Naive thymus-derived CD4-positive, alpha-beta T cell (primary cell): ENCODE measurements at regions of chr2 and their contacts with region 1.

Region 1: GRCh38 chr2:240513549-240514287 is 44.1 kb downstream of the ANKMY1 start:
- DNase-seq: peak; percentile 57 to 82 (median 76)
- ATAC-seq: peak; percentile 99
- H3K4me3 ChIP-seq: no peak overlapping the region
- H3K4me3 Mint-ChIP-seq: peak overlapping the region in 3 of 10 donors; percentile 12 to 28 (median 13)
- H3K27ac ChIP-seq: no peak overlapping the region
- H3K27ac Mint-ChIP-seq: peak overlapping the region; percentile 9 to 76 (median 42)
- H3K4me1 ChIP-seq: peaks cover 6% of the 10 kb centered on the region in 2 donors
- H3K4me1 Mint-ChIP-seq: peaks cover 6 to 16% (median 12%) of the 10 kb centered on the region in 7 donors
- H3K27me3 ChIP-seq: no peaks in the 10 kb centered on the region
- H3K27me3 Mint-ChIP-seq: no peaks in the 10 kb centered on the region

Region 2: GRCh38 chr2:240579771-240580614 is 66.3 kb after region 1 on chr2:
- CTCF ChIA-PET with region 1: interaction called, 9 read pairs
- POLR2A ChIA-PET with region 1: interaction called, 5 read pairs
- intact Hi-C with region 1: loop called in 1 of 2 experiments (anchors 2 kb)
- DNase-seq: peak; percentile 52 to 81 (median 67)
- ATAC-seq: peak; percentile 91
- H3K4me3 ChIP-seq: no peak overlapping the region
- H3K4me3 Mint-ChIP-seq: peak overlapping the region in 9 of 10 donors; percentile 9 to 58 (median 45)
- H3K27ac ChIP-seq: peak overlapping the region; percentile 33
- H3K27ac Mint-ChIP-seq: peak overlapping the region; percentile 36 to 87 (median 78)
- H3K4me1 ChIP-seq: peaks cover 19 to 22% of the 10 kb centered on the region in 2 donors
- H3K4me1 Mint-ChIP-seq: peaks cover 33 to 62% (median 48%) of the 10 kb centered on the region in 7 donors
- H3K27me3 ChIP-seq: no peaks in the 10 kb centered on the region
- H3K27me3 Mint-ChIP-seq: no peaks in the 10 kb centered on the region

Region 3: GRCh38 chr2:240586198-240586918 is 72.6 kb after region 1 on chr2 and contains the start of gene CAPN10:
- CTCF ChIA-PET with region 1: interaction called, 6 read pairs
- POLR2A ChIA-PET with region 1: interaction called, 4 read pairs
- intact Hi-C with region 1: loop called (anchors 1 kb)
- DNase-seq: peak; percentile 93 to 98 (median 97)
- ATAC-seq: peak; percentile 92
- H3K4me3 ChIP-seq: peak within 1 kb of the TSS; percentile 89
- H3K4me3 Mint-ChIP-seq: peak within 1 kb of the TSS; percentile 82 to 97 (median 94)
- H3K27ac ChIP-seq: peak within 1 kb of the TSS; percentile 94
- H3K27ac Mint-ChIP-seq: peak within 1 kb of the TSS; percentile 90 to 97 (median 92)
- H3K4me1 ChIP-seq: peaks cover 30 to 33% of the 10 kb centered on the region in 2 donors
- H3K4me1 Mint-ChIP-seq: peaks cover 31 to 69% (median 56%) of the 10 kb centered on the region in 7 donors
- H3K27me3 ChIP-seq: no peaks in the 10 kb centered on the region
- H3K27me3 Mint-ChIP-seq: no peaks in the 10 kb centered on the region
- total RNA-seq, gene CAPN10: 54.1 to 74.8 (median 64.5) TPM

Region 4: DNA sequence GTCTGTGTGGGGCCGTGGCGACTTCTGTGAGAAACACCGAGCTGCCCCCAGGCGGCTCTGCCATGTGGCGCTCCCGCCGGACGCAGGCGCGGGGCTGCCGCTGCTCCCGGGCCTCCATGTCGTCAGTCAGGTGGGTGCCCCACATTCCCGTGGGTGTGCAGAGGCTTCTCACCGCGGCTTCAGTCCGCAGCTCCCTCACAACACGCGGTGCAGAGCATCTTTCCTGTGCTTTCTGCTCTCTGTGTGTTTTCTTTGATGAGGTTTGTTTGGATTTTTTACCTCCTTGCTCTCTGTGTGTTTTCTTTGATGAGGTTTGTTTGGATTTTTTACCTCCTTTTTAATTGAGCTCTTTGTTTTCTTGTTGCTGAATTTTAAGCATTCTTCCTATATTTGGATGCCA is 190.9 kb after region 1 on chr2:
- CTCF ChIA-PET with region 1: no interaction called
- POLR2A ChIA-PET with region 1: no interaction called
- intact Hi-C with region 1: loop called in 1 of 2 experiments (anchors 10 kb)
- DNase-seq: peak in 7 of 9 donors; percentile 38 to 62 (median 55)
- ATAC-seq: peak; percentile 62
- H3K4me3 ChIP-seq: no peak overlapping the region
- H3K4me3 Mint-ChIP-seq: peak overlapping the region; percentile 5 to 78 (median 57)
- H3K27ac ChIP-seq: no peak overlapping the region
- H3K27ac Mint-ChIP-seq: peak overlapping the region in 5 of 9 donors; percentile 1 to 78 (median 16)
- H3K4me1 ChIP-seq: peaks cover 10 to 22% of the 10 kb centered on the region in 2 donors
- H3K4me1 Mint-ChIP-seq: peaks cover 15 to 20% (median 17%) of the 10 kb centered on the region in 7 donors
- H3K27me3 ChIP-seq: peaks cover 0 to 3% of the 10 kb centered on the region in 2 donors
- H3K27me3 Mint-ChIP-seq: peaks cover 5 to 46% (median 10%) of the 10 kb centered on the region in 5 donors

Region 5: GRCh38 chr2:240759454-240759853 is 245.7 kb after region 1 on chr2:
- CTCF ChIA-PET with region 1: no interaction called
- POLR2A ChIA-PET with region 1: no interaction called
- intact Hi-C with region 1: loop called in 1 of 2 experiments (anchors 5 kb)
- DNase-seq: peak in 1 of 9 donors; percentile 41
- ATAC-seq: no peak
- H3K4me3 ChIP-seq: no peak overlapping the region
- H3K4me3 Mint-ChIP-seq: no peak overlapping the region
- H3K27ac ChIP-seq: no peak overlapping the region
- H3K27ac Mint-ChIP-seq: peak overlapping the region in 1 of 9 donors; percentile 12
- H3K4me1 ChIP-seq: no peaks in the 10 kb centered on the region
- H3K4me1 Mint-ChIP-seq: peaks cover 0 to 2% (median 0%) of the 10 kb centered on the region in 7 donors
- H3K27me3 ChIP-seq: no peaks in the 10 kb centered on the region
- H3K27me3 Mint-ChIP-seq: no peaks in the 10 kb centered on the region

Region 6: DNA sequence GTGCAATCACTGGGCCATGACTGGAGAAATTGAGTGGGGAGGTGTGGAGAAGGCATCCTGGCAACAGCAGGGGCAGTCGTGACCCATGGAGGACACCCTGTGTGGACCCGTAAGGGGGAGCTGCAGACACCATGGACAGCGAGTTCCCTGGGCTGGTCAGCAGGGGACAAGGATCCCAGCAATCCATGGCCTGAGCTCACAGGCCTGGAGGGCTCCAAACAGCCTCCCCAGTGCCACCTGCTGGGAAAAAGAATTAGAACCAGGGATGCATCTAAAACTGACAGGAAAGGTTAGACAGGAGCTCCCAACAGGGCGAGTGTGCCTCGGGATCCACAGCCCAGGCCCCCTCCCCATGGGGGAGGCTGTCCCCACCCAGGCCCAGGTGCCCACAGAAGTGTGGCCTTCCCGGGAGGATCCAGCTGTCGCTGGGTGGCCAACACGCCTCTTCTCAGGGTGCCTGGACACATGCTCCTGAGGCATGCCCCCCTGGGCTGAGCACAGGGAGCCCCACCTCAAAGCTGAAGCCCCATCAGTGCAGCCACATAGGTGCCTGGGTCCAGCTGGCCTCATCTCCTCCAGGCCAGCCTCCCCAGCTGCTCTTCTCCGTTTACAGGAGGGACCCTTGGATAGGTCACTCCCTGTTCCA is 326.8 kb after region 1 on chr2:
- CTCF ChIA-PET with region 1: interaction called, 8 read pairs
- POLR2A ChIA-PET with region 1: no interaction called
- intact Hi-C with region 1: loop called in 1 of 2 experiments (anchors 1 kb)
- DNase-seq: peak in 2 of 9 donors; percentile 28 to 29
- ATAC-seq: peak; percentile 12
- H3K4me3 ChIP-seq: no peak overlapping the region
- H3K4me3 Mint-ChIP-seq: no peak overlapping the region
- H3K27ac ChIP-seq: no peak overlapping the region
- H3K27ac Mint-ChIP-seq: no peak overlapping the region
- H3K4me1 ChIP-seq: no peaks in the 10 kb centered on the region
- H3K4me1 Mint-ChIP-seq: no peaks in the 10 kb centered on the region
- H3K27me3 ChIP-seq: no peaks in the 10 kb centered on the region
- H3K27me3 Mint-ChIP-seq: peaks cover 0 to 5% (median 0%) of the 10 kb centered on the region in 5 donors